ENCODE measurements at regions of chr10 and their contacts with region 1.

Region 1: DNA sequence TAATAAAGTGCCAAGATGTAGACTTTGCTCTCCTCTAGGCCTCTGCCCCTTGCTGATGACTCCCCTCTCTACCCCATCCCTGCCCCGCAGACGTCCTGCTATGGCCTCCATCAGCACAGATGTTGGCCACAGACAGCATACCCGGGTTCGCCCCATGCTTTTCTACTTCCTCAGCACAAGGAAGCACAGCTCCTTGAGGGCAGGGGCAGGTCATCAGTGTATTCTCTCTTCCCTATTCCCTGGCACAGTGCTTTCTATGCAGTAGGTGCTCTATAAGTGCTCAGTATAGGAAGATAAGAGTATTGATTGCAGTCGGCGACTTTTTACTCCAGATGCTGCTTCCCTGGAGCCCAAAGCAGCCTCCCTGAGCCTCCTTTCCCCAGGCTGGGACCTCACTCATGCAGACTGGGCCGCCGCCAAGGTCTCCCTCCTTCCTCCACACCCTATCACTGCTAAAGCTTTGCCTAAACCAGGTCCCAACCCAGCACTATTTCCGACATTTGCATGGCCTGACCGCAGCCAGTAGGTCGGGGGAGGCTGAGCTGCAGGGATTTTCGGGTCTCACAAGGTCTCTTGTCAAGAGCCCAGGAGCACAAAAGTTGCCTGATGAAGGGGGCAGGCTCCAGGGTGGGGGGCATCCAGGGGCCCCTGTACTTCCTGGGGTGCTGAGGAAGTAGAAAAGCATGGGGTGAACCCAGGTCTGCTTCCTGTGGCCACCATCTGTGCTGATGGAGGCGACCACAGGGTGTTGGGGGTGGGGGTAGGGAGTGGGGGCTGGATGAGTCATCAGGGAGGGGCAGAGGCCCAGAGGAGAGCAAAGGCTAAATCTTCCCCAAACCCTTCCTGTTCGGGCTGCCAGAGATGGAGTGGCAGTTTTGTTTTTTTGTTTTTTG is 8.0 kb downstream of the CALHM3 start:
- DNase-seq: peak; percentile 85
- ATAC-seq: peak; percentile 78
- H3K4me3 ChIP-seq: peak overlapping the region in 3 of 5 experiments; percentile 15 to 35 (median 31)
- H3K4me3 Mint-ChIP-seq: peak overlapping the region; percentile 79
- H3K27ac ChIP-seq: peak overlapping the region; percentile 69 to 78
- H3K27ac Mint-ChIP-seq: peak overlapping the region; percentile 96
- H3K4me1 ChIP-seq: peaks cover 40 to 70% of the 10 kb centered on the region in 2 donors
- H3K4me1 Mint-ChIP-seq: peaks cover 71% of the 10 kb centered on the region
- H3K27me3 ChIP-seq: no peaks in the 10 kb centered on the region
- H3K27me3 Mint-ChIP-seq: no peaks in the 10 kb centered on the region
- CTCF ChIP-seq: no peak

Region 2: GRCh38 chr10:103396064-103396788 is 74.8 kb before region 1 on chr10 and contains the starts of genes ATP5MK and PDCD11:
- CTCF ChIA-PET with region 1: no interaction called
- POLR2A ChIA-PET with region 1: no interaction called
- intact Hi-C with region 1: loop called (anchors 1 kb)
- DNase-seq: peak; percentile 95
- ATAC-seq: peak; percentile 98
- H3K4me3 ChIP-seq: peak within 1 kb of the TSS; percentile 68 to 92 (median 76)
- H3K4me3 Mint-ChIP-seq: peak within 1 kb of the TSS; percentile 97
- H3K27ac ChIP-seq: peak within 1 kb of the TSS; percentile 38 to 64
- H3K27ac Mint-ChIP-seq: peak within 1 kb of the TSS; percentile 89
- H3K4me1 ChIP-seq: peaks cover 22 to 23% of the 10 kb centered on the region in 2 donors
- H3K4me1 Mint-ChIP-seq: peaks cover 44% of the 10 kb centered on the region
- H3K27me3 ChIP-seq: no peaks in the 10 kb centered on the region
- H3K27me3 Mint-ChIP-seq: no peaks in the 10 kb centered on the region
- CTCF ChIP-seq: no peak
- total RNA-seq, gene ATP5MK: 96.6 and 107 TPM in 2 replicates
- total RNA-seq, gene PDCD11: 36.4 and 42.3 TPM in 2 replicates

Region 3: DNA sequence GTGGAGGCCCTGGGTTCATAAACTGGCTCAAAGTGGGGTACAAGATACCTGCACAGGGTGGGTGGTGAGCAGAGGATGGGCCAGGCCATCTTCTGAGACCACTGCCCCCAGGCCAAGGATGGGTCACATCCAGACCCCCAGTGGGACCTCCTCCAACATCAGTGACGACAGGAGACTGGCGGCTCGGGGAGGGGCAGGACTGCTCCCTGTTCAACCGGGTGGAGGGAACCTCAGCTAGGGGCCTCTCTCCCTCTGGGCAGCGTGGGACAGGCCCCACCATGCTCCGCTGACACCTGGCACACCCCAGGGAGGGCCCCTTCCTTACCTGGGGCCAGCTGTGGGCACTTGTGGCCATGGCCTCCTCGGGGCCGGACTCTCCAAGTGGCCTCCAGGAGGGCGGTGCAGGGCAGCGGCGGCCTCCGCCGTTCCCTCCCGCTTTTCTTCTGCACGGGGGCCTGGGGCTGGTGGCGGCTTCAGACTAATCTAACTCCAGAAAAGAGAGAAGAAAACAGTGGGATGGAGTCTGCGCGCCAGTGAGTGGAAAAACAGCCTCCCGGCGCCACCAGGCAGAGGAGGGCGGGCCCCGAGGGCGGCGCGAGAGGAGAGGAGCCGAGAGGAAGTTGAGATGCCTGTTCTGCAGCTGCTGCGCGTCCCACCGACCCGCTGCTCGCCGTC is 19.0 kb before region 1 on chr10 and contains the start of gene CALHM2:
- CTCF ChIA-PET with region 1: interaction called, 32 read pairs
- POLR2A ChIA-PET with region 1: interaction called, 24 read pairs
- intact Hi-C with region 1: loop called (anchors 1 kb)
- DNase-seq: peak; percentile 65
- ATAC-seq: peak; percentile 86
- H3K4me3 ChIP-seq: peak within 1 kb of the TSS; percentile 22 to 91 (median 64)
- H3K4me3 Mint-ChIP-seq: peak within 1 kb of the TSS; percentile 93
- H3K27ac ChIP-seq: peak within 1 kb of the TSS; percentile 24 to 71
- H3K27ac Mint-ChIP-seq: peak within 1 kb of the TSS; percentile 91
- H3K4me1 ChIP-seq: peaks cover 20 to 39% of the 10 kb centered on the region in 2 donors
- H3K4me1 Mint-ChIP-seq: peaks cover 42% of the 10 kb centered on the region
- H3K27me3 ChIP-seq: peaks cover 0 to 6% (median 0%) of the 10 kb centered on the region in 4 experiments
- H3K27me3 Mint-ChIP-seq: no peaks in the 10 kb centered on the region
- CTCF ChIP-seq: no peak
- total RNA-seq, gene CALHM2: 42.8 and 46.2 TPM in 2 replicates

Region 4: GRCh38 chr10:103739039-103739764 is 268.2 kb after region 1 on chr10:
- CTCF ChIA-PET with region 1: no interaction called
- POLR2A ChIA-PET with region 1: no interaction called
- intact Hi-C with region 1: no loop called
- DNase-seq: no peak
- ATAC-seq: no peak
- H3K4me3 ChIP-seq: no peak overlapping the region
- H3K4me3 Mint-ChIP-seq: no peak overlapping the region
- H3K27ac ChIP-seq: no peak overlapping the region
- H3K27ac Mint-ChIP-seq: no peak overlapping the region
- H3K4me1 ChIP-seq: no peaks in the 10 kb centered on the region
- H3K4me1 Mint-ChIP-seq: no peaks in the 10 kb centered on the region
- H3K27me3 ChIP-seq: peaks cover 0 to 2% (median 0%) of the 10 kb centered on the region in 4 experiments
- H3K27me3 Mint-ChIP-seq: peaks cover 8% of the 10 kb centered on the region
- CTCF ChIP-seq: no peak